ENCODE measurements at regions of chr17 and their contacts with region 1.

Region 1: GRCh38 chr17:3845621-3846441 is at the start of gene NCBP3:
- DNase-seq: peak; percentile 92
- ATAC-seq: peak; percentile 98 to 99
- total RNA-seq, gene NCBP3: 16.3 to 24.4 TPM

Region 2: GRCh38 chr17:4066210-4066609 is 220.4 kb after region 1 on chr17:
- intact Hi-C with region 1: loop called in 1 of 2 experiments (anchors 5 kb)
- DNase-seq: no peak
- ATAC-seq: no peak

Measured in left cardiac atrium (tissue), 4 donors.